Activated B cell treated with CpG ODN at 0.5 μM for 24 hours (primary cell): ENCODE measurements at regions of chr10 and their contacts with region 1.

Region 1: DNA sequence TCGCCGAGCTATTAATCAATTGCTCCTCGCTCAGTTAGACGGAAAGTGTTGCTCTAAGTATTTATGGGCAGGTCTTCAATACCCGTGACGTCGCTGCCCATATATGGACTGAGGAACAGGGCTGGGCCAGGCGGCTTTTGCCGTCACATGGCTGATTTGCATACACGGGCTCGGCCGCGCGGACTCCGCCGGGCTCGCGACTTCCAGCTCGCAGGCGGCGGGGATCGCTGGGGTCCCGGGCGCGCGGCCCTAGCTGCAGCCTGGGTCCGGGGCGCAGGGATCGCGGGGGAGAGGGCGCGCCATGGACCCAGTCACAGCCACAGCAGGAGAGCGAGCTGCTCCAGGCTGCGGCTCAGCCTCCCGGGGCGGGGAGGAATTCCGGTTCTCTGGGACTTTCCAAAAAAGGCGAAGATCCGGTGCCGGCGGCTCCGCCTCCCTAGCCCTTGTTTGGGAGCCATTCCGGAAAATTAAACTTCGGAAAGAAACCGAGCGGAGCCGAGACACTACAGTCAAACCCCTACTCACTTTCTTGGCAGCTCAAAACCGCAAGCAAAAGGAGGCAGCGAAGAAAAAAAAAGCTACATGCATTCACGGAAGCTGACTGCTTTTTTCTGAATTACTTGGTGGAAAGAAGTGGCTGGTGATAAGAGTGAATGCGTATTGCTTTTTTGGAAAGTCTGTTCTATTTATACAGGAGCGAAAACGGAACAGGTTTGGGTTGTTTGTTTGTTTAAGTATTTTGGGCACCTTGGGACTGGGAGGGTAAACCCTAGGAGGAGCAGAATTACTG is at the start of gene EGR2:
- DNase-seq: peak; percentile 96
- ATAC-seq: peak; percentile 75
- H3K4me3 Mint-ChIP-seq: peak within 1 kb of the TSS; percentile 92
- H3K27ac Mint-ChIP-seq: peak within 1 kb of the TSS; percentile 94
- H3K4me1 Mint-ChIP-seq: peaks cover 56% of the 10 kb centered on the region
- H3K27me3 Mint-ChIP-seq: peaks cover 8% of the 10 kb centered on the region
- CTCF ChIP-seq: no peak
- total RNA-seq, gene EGR2: 6.1 and 9.4 TPM in 2 replicates

Region 2: GRCh38 chr10:61135276-61135721 is 1681.2 kb before region 1 on chr10:
- CTCF ChIA-PET with region 1: interaction called, 3 read pairs
- POLR2A ChIA-PET with region 1: no interaction called
- intact Hi-C with region 1: loop called (anchors 5 kb)
- DNase-seq: peak; percentile 19
- ATAC-seq: peak; percentile 94
- H3K4me3 Mint-ChIP-seq: peak overlapping the region; percentile 68
- H3K27ac Mint-ChIP-seq: peak overlapping the region; percentile 91
- H3K4me1 Mint-ChIP-seq: peaks cover 43% of the 10 kb centered on the region
- H3K27me3 Mint-ChIP-seq: no peaks in the 10 kb centered on the region
- CTCF ChIP-seq: no peak

Region 3: DNA sequence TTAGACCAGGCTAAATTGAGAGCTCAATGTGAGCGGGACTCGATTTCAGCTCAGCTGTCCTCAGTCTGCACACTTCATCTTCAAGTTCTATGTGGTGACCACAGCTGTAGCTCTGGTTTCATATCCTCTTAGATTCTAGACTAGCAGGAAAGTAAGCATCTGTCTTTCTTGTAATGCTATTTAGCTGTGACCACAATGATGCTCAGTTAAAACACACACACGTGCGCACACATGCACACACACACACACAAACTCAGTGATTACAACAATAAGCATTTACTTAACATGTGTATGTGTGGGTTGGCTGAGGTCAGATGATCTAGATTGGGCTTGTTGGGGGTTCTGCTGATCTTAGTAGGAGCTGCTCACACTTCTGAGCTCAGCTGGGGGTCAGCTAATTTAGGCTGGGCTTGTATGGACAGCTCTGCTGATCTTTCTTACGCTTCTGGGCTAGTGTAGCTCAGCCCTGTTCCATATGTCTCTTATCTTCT is 359.9 kb before region 1 on chr10:
- CTCF ChIA-PET with region 1: no interaction called
- POLR2A ChIA-PET with region 1: no interaction called
- intact Hi-C with region 1: loop called (anchors 5 kb)
- DNase-seq: peak; percentile 22
- ATAC-seq: peak; percentile 93
- H3K4me3 Mint-ChIP-seq: peak overlapping the region; percentile 53
- H3K27ac Mint-ChIP-seq: peak overlapping the region; percentile 74
- H3K4me1 Mint-ChIP-seq: peaks cover 39% of the 10 kb centered on the region
- H3K27me3 Mint-ChIP-seq: no peaks in the 10 kb centered on the region
- CTCF ChIP-seq: no peak

Region 4: GRCh38 chr10:62610649-62611229 is 205.8 kb before region 1 on chr10:
- CTCF ChIA-PET with region 1: interaction called, 171 read pairs
- POLR2A ChIA-PET with region 1: interaction called, 18 read pairs
- intact Hi-C with region 1: loop called (anchors 1 kb)
- DNase-seq: peak; percentile 37
- ATAC-seq: peak; percentile 95
- H3K4me3 Mint-ChIP-seq: no peak overlapping the region
- H3K27ac Mint-ChIP-seq: peak overlapping the region; percentile 30
- H3K4me1 Mint-ChIP-seq: peaks cover 15% of the 10 kb centered on the region
- H3K27me3 Mint-ChIP-seq: no peaks in the 10 kb centered on the region
- CTCF ChIP-seq: peak; percentile 38

Region 5: GRCh38 chr10:62681211-62681940 is 135.2 kb before region 1 on chr10:
- CTCF ChIA-PET with region 1: interaction called, 36 read pairs
- POLR2A ChIA-PET with region 1: interaction called, 19 read pairs
- intact Hi-C with region 1: loop called (anchors 1 kb)
- DNase-seq: peak; percentile 58
- ATAC-seq: peak; percentile 96
- H3K4me3 Mint-ChIP-seq: peak overlapping the region; percentile 46
- H3K27ac Mint-ChIP-seq: peak overlapping the region; percentile 55
- H3K4me1 Mint-ChIP-seq: peaks cover 22% of the 10 kb centered on the region
- H3K27me3 Mint-ChIP-seq: no peaks in the 10 kb centered on the region
- CTCF ChIP-seq: no peak

Region 6: GRCh38 chr10:62804356-62805230 is 11.9 kb before region 1 on chr10 and contains the start of gene ADO:
- CTCF ChIA-PET with region 1: interaction called, 5 read pairs
- POLR2A ChIA-PET with region 1: interaction called, 68 read pairs
- intact Hi-C with region 1: loop called (anchors 1 kb)
- DNase-seq: peak; percentile 77
- ATAC-seq: peak; percentile 87
- H3K4me3 Mint-ChIP-seq: peak within 1 kb of the TSS; percentile 95
- H3K27ac Mint-ChIP-seq: peak within 1 kb of the TSS; percentile 99
- H3K4me1 Mint-ChIP-seq: peaks cover 41% of the 10 kb centered on the region
- H3K27me3 Mint-ChIP-seq: no peaks in the 10 kb centered on the region
- CTCF ChIP-seq: no peak
- total RNA-seq, gene ADO: 21.6 and 21.7 TPM in 2 replicates

Region 7: GRCh38 chr10:63521416-63522276 is 705.1 kb after region 1 on chr10:
- CTCF ChIA-PET with region 1: no interaction called
- POLR2A ChIA-PET with region 1: no interaction called
- intact Hi-C with region 1: loop called (anchors 10 kb)
- DNase-seq: peak; percentile 72
- ATAC-seq: peak; percentile 70
- H3K4me3 Mint-ChIP-seq: peak overlapping the region; percentile 86
- H3K27ac Mint-ChIP-seq: peak overlapping the region; percentile 72
- H3K4me1 Mint-ChIP-seq: peaks cover 47% of the 10 kb centered on the region
- H3K27me3 Mint-ChIP-seq: no peaks in the 10 kb centered on the region
- CTCF ChIP-seq: no peak